PC-9 (cell line): ENCODE measurements at regions of chr2 and their contacts with region 1.

Region 1: GRCh38 chr2:201420442-201421113 is 30.7 kb downstream of the TRAK2 start:
- DNase-seq: no peak
- H3K4me3 ChIP-seq: no peak overlapping the region
- H3K27ac ChIP-seq: no peak overlapping the region
- H3K4me1 ChIP-seq: no peaks in the 10 kb centered on the region
- H3K27me3 ChIP-seq: no peaks in the 10 kb centered on the region
- CTCF ChIP-seq: no peak

Region 2: DNA sequence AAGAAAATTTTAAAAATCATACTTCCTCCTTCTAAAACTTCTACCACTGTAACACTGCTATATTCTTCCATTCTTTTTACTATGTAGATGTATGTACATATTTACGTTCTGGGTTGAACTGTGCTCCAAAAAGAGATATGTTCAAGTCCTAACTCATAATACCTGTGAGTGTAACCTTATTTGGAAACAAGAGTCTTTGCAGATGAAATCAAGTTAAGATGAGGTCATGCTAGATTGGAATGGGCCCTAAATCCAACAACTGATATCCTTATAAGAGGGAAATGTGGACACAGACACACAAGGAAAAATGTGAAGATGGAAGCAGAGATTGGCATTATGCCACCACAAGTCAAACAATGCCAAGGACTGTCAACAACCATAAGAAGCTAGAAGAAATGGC is 214.5 kb after region 1 on chr2:
- CTCF ChIA-PET with region 1: interaction called, 16 read pairs
- POLR2A ChIA-PET with region 1: no interaction called
- intact Hi-C with region 1: no loop called
- DNase-seq: no peak
- H3K4me3 ChIP-seq: no peak overlapping the region
- H3K27ac ChIP-seq: no peak overlapping the region
- H3K4me1 ChIP-seq: no peaks in the 10 kb centered on the region
- H3K27me3 ChIP-seq: no peaks in the 10 kb centered on the region
- CTCF ChIP-seq: no peak

Region 3: DNA sequence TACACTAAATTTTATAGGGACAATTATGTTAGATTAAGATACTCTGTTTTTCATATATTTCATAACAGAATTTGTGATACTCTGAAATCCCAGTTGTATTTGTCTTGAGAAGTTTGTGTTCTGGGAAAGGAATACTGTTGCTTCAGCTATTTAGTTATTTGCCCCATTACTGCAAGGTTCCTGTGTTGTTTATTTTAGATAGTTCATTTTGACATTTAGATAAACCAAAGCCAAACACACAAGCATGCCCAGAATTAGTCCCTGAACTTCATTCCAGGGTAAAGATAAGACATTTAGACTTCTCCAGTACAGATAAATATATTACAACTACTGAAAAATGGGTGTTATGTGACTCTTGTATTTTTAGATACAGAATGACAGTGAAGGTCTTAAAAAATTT is 1030.2 kb after region 1 on chr2:
- CTCF ChIA-PET with region 1: no interaction called
- POLR2A ChIA-PET with region 1: no interaction called
- intact Hi-C with region 1: no loop called
- DNase-seq: no peak
- H3K4me3 ChIP-seq: no peak overlapping the region
- H3K27ac ChIP-seq: no peak overlapping the region
- H3K4me1 ChIP-seq: no peaks in the 10 kb centered on the region
- H3K27me3 ChIP-seq: no peaks in the 10 kb centered on the region
- CTCF ChIP-seq: no peak